ENCODE measurements at regions of chr11 and their contacts with region 1.

Region 1: GRCh38 chr11:118956094-118956846 is at the start of gene UPK2:
- DNase-seq: peak; percentile 93
- H3K4me3 Mint-ChIP-seq: no peak within 1 kb of the TSS
- H3K27ac Mint-ChIP-seq: no peak within 1 kb of the TSS
- H3K4me1 Mint-ChIP-seq: peaks cover 3% of the 10 kb centered on the region
- H3K27me3 Mint-ChIP-seq: peaks cover 4% of the 10 kb centered on the region
- total RNA-seq, gene UPK2: not detected

Region 2: GRCh38 chr11:118907051-118908042 is 48.9 kb before region 1 on chr11:
- CTCF ChIA-PET with region 1: interaction called, 24 read pairs
- POLR2A ChIA-PET with region 1: no interaction called
- intact Hi-C with region 1: loop called (anchors 1 kb)
- DNase-seq: peak; percentile 93
- H3K4me3 Mint-ChIP-seq: no peak overlapping the region
- H3K27ac Mint-ChIP-seq: peak overlapping the region; percentile 65
- H3K4me1 Mint-ChIP-seq: peaks cover 44% of the 10 kb centered on the region
- H3K27me3 Mint-ChIP-seq: no peaks in the 10 kb centered on the region